Mammary epithelial cell (primary cell): ENCODE measurements at regions of chr9 and their contacts with region 1.

Region 1: GRCh38 chr9:101387871-101388506 is 3.2 kb upstream of the BAAT start:
- DNase-seq: peak; percentile 32
- H3K4me3 ChIP-seq: no peak overlapping the region
- H3K27ac ChIP-seq: no peak overlapping the region
- H3K4me1 ChIP-seq: no peaks in the 10 kb centered on the region
- H3K27me3 ChIP-seq: no peaks in the 10 kb centered on the region
- CTCF ChIP-seq: peak; percentile 55 to 72

Region 2: GRCh38 chr9:101317735-101318134 is 70.3 kb before region 1 on chr9:
- CTCF ChIA-PET with region 1: no interaction called
- dilution Hi-C with region 1: no loop called
- in situ Hi-C with region 1: no loop called
- intact Hi-C with region 1: loop called (anchors 2 kb)
- DNase-seq: no peak
- H3K4me3 ChIP-seq: no peak overlapping the region
- H3K27ac ChIP-seq: no peak overlapping the region
- H3K4me1 ChIP-seq: no peaks in the 10 kb centered on the region
- H3K27me3 ChIP-seq: no peaks in the 10 kb centered on the region
- CTCF ChIP-seq: no peak

Region 3: DNA sequence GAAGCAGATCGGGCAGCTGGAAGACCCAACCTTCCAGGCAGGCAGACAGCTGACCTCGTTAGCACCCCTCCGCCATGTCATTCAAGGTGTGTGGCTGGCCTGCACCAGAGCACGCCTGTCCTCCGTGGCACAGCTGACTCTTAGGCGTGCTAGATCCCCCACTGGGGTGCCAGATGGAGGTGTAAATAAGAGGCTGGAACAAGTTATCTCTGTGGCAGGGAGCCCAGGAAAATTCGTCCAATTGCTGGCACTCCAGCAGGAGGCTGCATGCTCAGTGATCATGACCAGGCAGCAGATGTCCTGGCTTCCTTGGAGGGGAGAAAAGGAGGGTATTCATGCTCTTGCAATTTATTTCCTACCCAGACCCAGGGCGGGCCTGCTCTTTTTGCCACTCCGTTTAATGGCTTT is 55.4 kb after region 1 on chr9:
- CTCF ChIA-PET with region 1: no interaction called
- dilution Hi-C with region 1: no loop called
- in situ Hi-C with region 1: no loop called
- intact Hi-C with region 1: no loop called
- DNase-seq: no peak
- H3K4me3 ChIP-seq: no peak overlapping the region
- H3K27ac ChIP-seq: no peak overlapping the region
- H3K4me1 ChIP-seq: no peaks in the 10 kb centered on the region
- H3K27me3 ChIP-seq: peaks cover 2% of the 10 kb centered on the region
- CTCF ChIP-seq: no peak